ENCODE measurements at regions of chr1 and their contacts with region 1.

Region 1: GRCh38 chr1:36285448-36286101 is 20.6 kb upstream of the SH3D21 start:
- DNase-seq: no peak

Region 2: GRCh38 chr1:36239941-36240637 is 45.5 kb before region 1 on chr1:
- intact Hi-C with region 1: loop called (anchors 5 kb)
- DNase-seq: peak; percentile 76

Region 3: GRCh38 chr1:36269408-36269838 is 16.2 kb before region 1 on chr1:
- intact Hi-C with region 1: no loop called
- DNase-seq: no peak

Measured in cardiac septum (tissue), 1 donor.